CD4-positive, alpha-beta memory T cell (primary cell): ENCODE measurements at regions of chr17 and their contacts with region 1.

Region 1: DNA sequence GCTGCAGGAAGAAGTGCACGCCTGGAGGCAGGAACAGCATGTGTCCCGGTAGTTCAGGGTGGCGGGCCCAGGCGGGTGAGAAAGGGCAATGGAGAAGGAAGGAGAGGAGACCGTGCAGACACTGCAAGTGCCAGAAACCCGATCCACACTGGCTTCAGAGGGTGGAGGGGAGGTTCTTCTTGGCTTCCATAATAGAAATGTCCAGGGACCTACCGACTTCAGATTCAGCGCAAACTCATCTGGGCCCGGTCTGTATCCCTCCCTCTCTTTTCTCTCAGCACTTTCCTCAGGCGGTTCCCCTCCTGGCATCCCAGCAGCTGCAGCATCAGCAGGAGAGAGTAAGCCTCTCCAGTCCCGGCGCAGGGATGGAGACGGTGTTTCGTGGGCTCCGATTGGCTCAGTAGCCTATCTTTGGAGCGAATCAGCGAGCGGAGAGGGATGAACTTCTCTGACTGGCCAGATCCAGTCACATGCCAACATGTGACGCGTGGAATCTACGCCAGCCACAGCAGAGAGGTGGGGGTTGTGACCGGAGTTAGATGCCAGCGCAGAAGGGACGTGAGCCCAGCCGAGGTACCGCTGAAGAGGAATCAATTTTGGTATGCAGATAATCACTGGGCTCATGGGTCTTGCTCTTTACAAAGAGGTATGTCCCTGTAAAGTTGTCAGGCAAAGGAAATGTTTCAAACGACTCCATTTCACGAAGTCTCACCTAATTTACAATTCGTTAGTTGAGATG is 1.9 kb upstream of the PRPSAP2 start:
- DNase-seq: peak; percentile 85 to 95 (median 86)
- H3K4me3 ChIP-seq: peak overlapping the region; percentile 62 to 79
- H3K4me3 Mint-ChIP-seq: peak overlapping the region; percentile 92 to 99 (median 96)
- H3K27ac ChIP-seq: peak overlapping the region; percentile 48
- H3K27ac Mint-ChIP-seq: peak overlapping the region; percentile 90 to 98 (median 94)
- H3K4me1 ChIP-seq: peaks cover 46% of the 10 kb centered on the region
- H3K4me1 Mint-ChIP-seq: peaks cover 31 to 50% (median 41%) of the 10 kb centered on the region in 4 donors
- H3K27me3 ChIP-seq: no peaks in the 10 kb centered on the region
- H3K27me3 Mint-ChIP-seq: no peaks in the 10 kb centered on the region

Region 2: GRCh38 chr17:18377437-18378204 is 478.4 kb before region 1 on chr17 and contains the start of gene EVPLL:
- CTCF ChIA-PET with region 1: no interaction called
- POLR2A ChIA-PET with region 1: no interaction called
- intact Hi-C with region 1: no loop called
- DNase-seq: no peak
- H3K4me3 ChIP-seq: no peak within 1 kb of the TSS
- H3K4me3 Mint-ChIP-seq: no peak within 1 kb of the TSS
- H3K27ac ChIP-seq: no peak within 1 kb of the TSS
- H3K27ac Mint-ChIP-seq: peak within 1 kb of the TSS in 1 of 7 donors; percentile 69
- H3K4me1 ChIP-seq: no peaks in the 10 kb centered on the region
- H3K4me1 Mint-ChIP-seq: peaks cover 0 to 10% (median 6%) of the 10 kb centered on the region in 4 donors
- H3K27me3 ChIP-seq: no peaks in the 10 kb centered on the region
- H3K27me3 Mint-ChIP-seq: peaks cover 1 to 9% of the 10 kb centered on the region in 2 donors
- total RNA-seq, gene EVPLL: not detected

Region 3: GRCh38 chr17:18904482-18904881 is 48.5 kb after region 1 on chr17:
- CTCF ChIA-PET with region 1: no interaction called
- POLR2A ChIA-PET with region 1: interaction called, 6 read pairs
- intact Hi-C with region 1: loop called (anchors 10 kb)
- DNase-seq: no peak
- H3K4me3 ChIP-seq: no peak overlapping the region
- H3K4me3 Mint-ChIP-seq: no peak overlapping the region
- H3K27ac ChIP-seq: no peak overlapping the region
- H3K27ac Mint-ChIP-seq: no peak overlapping the region
- H3K4me1 ChIP-seq: peaks cover 39% of the 10 kb centered on the region
- H3K4me1 Mint-ChIP-seq: peaks cover 24 to 46% (median 29%) of the 10 kb centered on the region in 4 donors
- H3K27me3 ChIP-seq: no peaks in the 10 kb centered on the region
- H3K27me3 Mint-ChIP-seq: no peaks in the 10 kb centered on the region

Region 4: GRCh38 chr17:18949566-18949965 is 93.6 kb after region 1 on chr17:
- CTCF ChIA-PET with region 1: no interaction called
- POLR2A ChIA-PET with region 1: interaction called, 22 read pairs
- intact Hi-C with region 1: no loop called
- DNase-seq: no peak
- H3K4me3 ChIP-seq: no peak overlapping the region
- H3K4me3 Mint-ChIP-seq: no peak overlapping the region
- H3K27ac ChIP-seq: no peak overlapping the region
- H3K27ac Mint-ChIP-seq: no peak overlapping the region
- H3K4me1 ChIP-seq: peaks cover 10% of the 10 kb centered on the region
- H3K4me1 Mint-ChIP-seq: peaks cover 11 to 20% (median 17%) of the 10 kb centered on the region in 4 donors
- H3K27me3 ChIP-seq: no peaks in the 10 kb centered on the region
- H3K27me3 Mint-ChIP-seq: peaks cover 0 to 2% of the 10 kb centered on the region in 2 donors

Region 5: GRCh38 chr17:19377602-19378392 is 521.8 kb after region 1 on chr17:
- CTCF ChIA-PET with region 1: no interaction called
- POLR2A ChIA-PET with region 1: no interaction called
- intact Hi-C with region 1: loop called (anchors 10 kb)
- DNase-seq: peak; percentile 94 to 96 (median 95)
- H3K4me3 ChIP-seq: peak overlapping the region; percentile 96 to 98
- H3K4me3 Mint-ChIP-seq: peak overlapping the region; percentile 94 to 100 (median 99)
- H3K27ac ChIP-seq: peak overlapping the region; percentile 91
- H3K27ac Mint-ChIP-seq: peak overlapping the region; percentile 91 to 99 (median 98)
- H3K4me1 ChIP-seq: peaks cover 19% of the 10 kb centered on the region
- H3K4me1 Mint-ChIP-seq: peaks cover 12 to 49% (median 18%) of the 10 kb centered on the region in 4 donors
- H3K27me3 ChIP-seq: no peaks in the 10 kb centered on the region
- H3K27me3 Mint-ChIP-seq: no peaks in the 10 kb centered on the region